CD4-positive, alpha-beta T cell (primary cell): ENCODE measurements at regions of chrX and their contacts with region 1.

Region 1: DNA sequence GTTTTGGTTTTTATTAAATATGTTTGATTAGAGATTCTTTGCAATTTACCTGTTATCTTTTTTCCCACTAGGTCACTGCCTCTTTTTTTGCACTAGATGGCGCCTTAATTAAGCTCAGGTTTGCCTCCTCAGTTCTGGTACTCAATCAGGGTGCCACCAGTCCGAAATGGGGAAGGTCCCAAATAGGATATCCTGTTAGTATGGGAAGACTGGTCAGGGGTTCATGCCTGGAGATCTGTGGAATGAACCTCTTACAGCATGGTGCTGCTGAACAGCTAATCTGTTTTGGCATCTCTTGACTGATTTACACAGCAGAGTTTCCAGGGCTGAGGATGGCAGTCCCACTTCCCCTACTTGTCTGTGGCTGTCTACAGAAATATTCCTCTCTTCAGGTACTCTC is 24.2 kb upstream of the VSIG1 start:
- DNase-seq: peak in 6 of 14 experiments; percentile 5 to 56 (median 34)
- ATAC-seq: no peak
- H3K4me3 ChIP-seq: peak overlapping the region; percentile 62
- H3K4me3 Mint-ChIP-seq: peak overlapping the region; percentile 83
- H3K27ac ChIP-seq: peak overlapping the region; percentile 35 to 77
- H3K27ac Mint-ChIP-seq: peak overlapping the region; percentile 100
- H3K4me1 ChIP-seq: peaks cover 34% of the 10 kb centered on the region
- H3K4me1 Mint-ChIP-seq: peaks cover 91% of the 10 kb centered on the region
- H3K27me3 ChIP-seq: no peaks in the 10 kb centered on the region
- H3K27me3 Mint-ChIP-seq: no peaks in the 10 kb centered on the region
- CTCF ChIP-seq: peak; percentile 65

Region 2: DNA sequence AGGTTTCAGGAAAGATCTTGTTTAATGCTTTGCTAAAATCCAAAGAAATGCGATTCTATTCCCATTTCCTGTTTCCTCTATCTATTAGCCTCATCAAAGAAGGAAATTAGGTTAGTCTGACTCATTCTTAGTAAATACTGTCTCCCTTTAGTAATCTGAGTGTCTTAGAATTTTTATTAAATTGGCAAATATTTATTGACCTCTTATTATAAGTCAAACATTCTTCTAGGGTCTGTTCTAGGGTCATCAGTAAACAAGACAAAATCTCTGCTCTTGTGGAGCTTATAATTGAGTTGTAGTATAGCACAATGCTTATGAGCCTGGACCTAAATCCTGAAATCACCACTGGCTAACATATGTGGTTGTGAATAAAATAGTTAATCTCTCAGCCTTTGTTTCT is 205.9 kb before region 1 on chrX:
- CTCF ChIA-PET with region 1: no interaction called
- POLR2A ChIA-PET with region 1: no interaction called
- intact Hi-C with region 1: no loop called
- DNase-seq: no peak
- ATAC-seq: no peak
- H3K4me3 ChIP-seq: no peak overlapping the region
- H3K4me3 Mint-ChIP-seq: no peak overlapping the region
- H3K27ac ChIP-seq: no peak overlapping the region
- H3K27ac Mint-ChIP-seq: no peak overlapping the region
- H3K4me1 ChIP-seq: no peaks in the 10 kb centered on the region
- H3K4me1 Mint-ChIP-seq: no peaks in the 10 kb centered on the region
- H3K27me3 ChIP-seq: peaks cover 0 to 3% of the 10 kb centered on the region in 2 experiments
- H3K27me3 Mint-ChIP-seq: peaks cover 17% of the 10 kb centered on the region
- CTCF ChIP-seq: no peak

Region 3: DNA sequence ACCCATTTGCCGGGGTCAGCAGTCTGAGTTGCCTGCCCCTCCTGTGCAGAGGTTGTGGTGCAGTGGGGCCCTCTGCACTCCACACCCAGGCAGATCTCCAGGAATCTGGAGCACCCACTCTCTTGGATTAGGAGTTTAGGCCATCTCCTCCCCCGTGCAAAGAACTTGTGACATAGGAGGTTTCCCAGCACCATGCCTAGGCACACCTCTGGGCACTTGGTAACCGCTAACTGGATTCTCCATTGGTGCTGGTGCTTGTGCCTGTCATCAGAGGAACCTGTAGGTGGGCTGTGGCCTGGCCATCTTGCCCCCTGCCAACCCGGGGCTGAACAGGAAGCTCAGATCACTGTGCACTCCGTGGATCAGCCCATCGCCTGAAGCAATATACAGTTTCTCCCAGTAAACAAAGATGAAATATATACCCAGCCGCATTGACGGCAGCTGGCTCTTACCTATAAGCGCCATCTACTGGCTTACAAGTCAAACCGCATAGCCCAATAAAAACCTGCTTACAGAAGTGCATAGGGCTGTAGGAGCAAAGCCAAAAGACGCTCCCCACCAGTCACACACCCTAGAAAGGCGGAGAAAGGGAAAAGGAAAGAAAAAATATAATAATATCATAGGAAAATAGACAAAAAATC is 19.3 kb before region 1 on chrX:
- CTCF ChIA-PET with region 1: interaction called, 5 read pairs
- POLR2A ChIA-PET with region 1: interaction called, 8 read pairs
- intact Hi-C with region 1: loop called in 1 of 2 experiments (anchors 2 kb)
- DNase-seq: peak in 9 of 14 experiments; percentile 7 to 70 (median 25)
- ATAC-seq: peak; percentile 96
- H3K4me3 ChIP-seq: no peak overlapping the region
- H3K4me3 Mint-ChIP-seq: no peak overlapping the region
- H3K27ac ChIP-seq: no peak overlapping the region
- H3K27ac Mint-ChIP-seq: peak overlapping the region; percentile 43
- H3K4me1 ChIP-seq: peaks cover 6% of the 10 kb centered on the region
- H3K4me1 Mint-ChIP-seq: peaks cover 8% of the 10 kb centered on the region
- H3K27me3 ChIP-seq: no peaks in the 10 kb centered on the region
- H3K27me3 Mint-ChIP-seq: no peaks in the 10 kb centered on the region
- CTCF ChIP-seq: peak; percentile 37